ENCODE measurements at regions of chr7 and their contacts with region 1.

Region 1: DNA sequence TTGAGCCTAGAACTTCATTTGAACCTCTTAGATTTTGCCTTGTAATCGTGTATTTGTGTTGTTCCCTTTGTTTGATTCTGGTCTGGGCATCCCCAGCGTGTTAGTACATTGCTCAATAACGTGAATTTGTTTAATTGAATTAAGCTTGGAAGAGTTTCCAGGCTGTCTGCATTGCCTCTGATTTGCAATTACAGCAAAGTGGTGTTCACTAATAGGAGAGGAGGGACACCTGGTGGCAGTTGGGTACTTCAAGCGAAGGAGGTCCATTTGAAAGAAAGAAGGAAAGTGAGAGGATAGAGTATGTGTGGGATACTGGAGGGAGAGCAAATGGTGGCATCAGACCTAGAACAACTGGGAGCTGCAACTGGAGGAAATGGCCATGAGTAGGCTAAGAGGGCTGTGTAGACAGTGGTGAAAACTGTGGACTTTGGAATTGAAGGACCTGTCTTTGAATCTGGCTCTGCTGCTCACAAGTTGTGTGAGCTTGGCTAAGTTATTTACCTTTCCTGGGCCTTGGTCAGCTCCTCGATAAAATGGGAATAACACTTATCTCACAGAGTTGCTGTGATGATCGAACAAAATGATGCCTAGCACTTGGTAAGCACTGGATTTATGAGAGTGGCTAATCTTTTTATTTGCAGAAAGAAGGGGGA is 15.1 kb downstream of the LSMEM1 start:
- DNase-seq: peak; percentile 62 to 63
- H3K4me3 ChIP-seq: no peak overlapping the region
- H3K4me3 Mint-ChIP-seq: no peak overlapping the region
- H3K27ac Mint-ChIP-seq: no peak overlapping the region
- H3K4me1 ChIP-seq: no peaks in the 10 kb centered on the region
- H3K4me1 Mint-ChIP-seq: peaks cover 13% of the 10 kb centered on the region
- H3K27me3 ChIP-seq: no peaks in the 10 kb centered on the region
- H3K27me3 Mint-ChIP-seq: peaks cover 3% of the 10 kb centered on the region
- CTCF ChIP-seq: peak; percentile 56 to 74

Region 2: DNA sequence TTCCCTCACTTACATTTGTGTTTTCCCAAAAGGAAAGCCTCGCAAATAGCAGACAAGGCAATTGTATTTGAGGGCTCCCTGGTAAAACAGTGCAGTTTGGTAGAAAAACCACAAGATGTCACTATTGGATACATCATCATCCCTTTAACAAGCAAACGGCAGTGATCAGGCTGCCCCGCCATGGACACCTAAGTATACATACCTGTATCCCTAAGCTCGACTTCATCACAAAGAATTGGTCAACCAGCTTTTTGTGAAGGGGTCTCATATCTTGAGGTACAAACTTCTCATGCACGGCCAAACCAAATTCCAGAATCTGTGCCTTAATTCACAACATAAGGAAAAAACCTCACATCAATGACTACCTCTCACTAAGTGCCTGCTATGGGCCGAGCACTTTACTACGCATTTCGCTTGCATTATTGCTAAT is 754.1 kb before region 1 on chr7:
- CTCF ChIA-PET with region 1: no interaction called
- POLR2A ChIA-PET with region 1: no interaction called
- intact Hi-C with region 1: loop called (anchors 1 kb)
- DNase-seq: peak; percentile 65 to 67
- H3K4me3 ChIP-seq: no peak overlapping the region
- H3K4me3 Mint-ChIP-seq: no peak overlapping the region
- H3K27ac Mint-ChIP-seq: no peak overlapping the region
- H3K4me1 ChIP-seq: peaks cover 6% of the 10 kb centered on the region; the same call in 1 of the 2 replicates
- H3K4me1 Mint-ChIP-seq: peaks cover 8% of the 10 kb centered on the region
- H3K27me3 ChIP-seq: no peaks in the 10 kb centered on the region
- H3K27me3 Mint-ChIP-seq: no peaks in the 10 kb centered on the region
- CTCF ChIP-seq: peak; percentile 69 to 70

Region 3: DNA sequence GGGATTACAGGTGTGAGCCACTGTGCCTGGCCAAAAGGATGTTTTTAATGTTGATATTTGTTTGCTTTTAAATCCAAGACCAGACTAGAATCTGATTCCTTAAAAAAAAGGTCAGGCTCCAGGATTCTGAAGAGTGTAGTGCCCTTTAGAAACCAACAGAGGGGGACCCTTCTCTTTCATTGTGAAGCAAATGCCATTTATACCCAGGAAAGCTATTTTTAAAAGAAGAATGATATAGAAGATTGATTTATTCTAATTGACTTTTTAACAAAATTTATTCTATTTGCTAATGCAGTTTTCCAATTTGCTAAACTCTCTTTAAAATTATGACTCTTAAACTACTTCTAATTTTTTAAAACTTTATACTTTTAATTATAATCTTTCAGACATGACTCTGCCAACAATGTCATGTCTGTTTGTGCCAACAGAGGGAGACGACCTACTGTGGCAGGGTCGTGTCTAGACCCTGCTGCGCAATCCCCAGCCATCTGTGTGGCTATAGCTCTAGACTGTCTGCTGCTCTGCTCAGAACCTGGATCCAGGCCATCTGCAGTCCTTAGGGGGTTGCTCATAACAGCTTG is 732.6 kb before region 1 on chr7:
- CTCF ChIA-PET with region 1: no interaction called
- POLR2A ChIA-PET with region 1: no interaction called
- intact Hi-C with region 1: loop called (anchors 1 kb)
- DNase-seq: peak in 1 of 2 experiments; percentile 32
- H3K4me3 ChIP-seq: no peak overlapping the region
- H3K4me3 Mint-ChIP-seq: no peak overlapping the region
- H3K27ac Mint-ChIP-seq: no peak overlapping the region
- H3K4me1 ChIP-seq: peaks cover under 1% of the 10 kb centered on the region; the same call in 1 of the 2 replicates
- H3K4me1 Mint-ChIP-seq: no peaks in the 10 kb centered on the region
- H3K27me3 ChIP-seq: no peaks in the 10 kb centered on the region
- H3K27me3 Mint-ChIP-seq: no peaks in the 10 kb centered on the region
- CTCF ChIP-seq: peak; percentile 57 to 72

Region 4: DNA sequence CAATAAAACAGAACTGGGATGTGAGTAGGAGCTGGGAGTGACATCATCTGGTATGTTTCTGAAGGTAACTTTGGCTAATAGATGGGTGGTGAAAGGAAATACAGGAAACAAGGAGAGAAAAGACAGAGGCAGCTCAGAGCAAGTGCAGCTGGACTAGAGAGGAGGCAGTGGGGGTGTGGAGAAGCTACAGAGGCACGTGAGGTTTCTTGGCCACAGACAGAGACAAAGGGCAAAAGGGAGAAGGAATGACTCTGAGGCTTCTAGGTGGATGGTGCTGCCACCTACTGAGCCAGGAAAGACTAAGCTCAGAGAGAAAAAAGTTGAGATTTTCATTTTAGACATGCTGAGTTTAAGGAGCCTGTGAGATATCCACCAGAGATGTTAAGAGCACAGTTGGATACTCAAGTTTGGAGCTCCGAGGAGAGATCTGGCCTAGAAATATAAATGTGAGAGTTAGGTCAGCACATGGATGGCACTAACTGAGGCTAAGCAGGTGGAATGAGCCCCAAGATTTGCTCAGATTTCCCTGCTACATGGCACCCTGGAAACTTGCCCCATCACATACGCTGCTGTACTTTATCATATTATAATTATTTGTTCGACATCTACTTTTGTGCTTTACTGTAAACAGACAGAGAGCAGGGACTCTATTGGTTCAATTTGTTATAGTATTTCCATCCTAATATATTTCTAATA is 640.6 kb before region 1 on chr7:
- CTCF ChIA-PET with region 1: interaction called, 3 read pairs
- POLR2A ChIA-PET with region 1: no interaction called
- intact Hi-C with region 1: loop called (anchors 10 kb)
- DNase-seq: peak; percentile 59 to 61
- H3K4me3 ChIP-seq: no peak overlapping the region
- H3K4me3 Mint-ChIP-seq: no peak overlapping the region
- H3K27ac Mint-ChIP-seq: no peak overlapping the region
- H3K4me1 ChIP-seq: peaks cover 10% of the 10 kb centered on the region
- H3K4me1 Mint-ChIP-seq: peaks cover 9% of the 10 kb centered on the region
- H3K27me3 ChIP-seq: no peaks in the 10 kb centered on the region
- H3K27me3 Mint-ChIP-seq: no peaks in the 10 kb centered on the region
- CTCF ChIP-seq: peak; percentile 46 to 75

Region 5: GRCh38 chr7:112080441-112080840 is 415.5 kb before region 1 on chr7:
- CTCF ChIA-PET with region 1: no interaction called
- POLR2A ChIA-PET with region 1: no interaction called
- intact Hi-C with region 1: loop called (anchors 10 kb)
- DNase-seq: no peak
- H3K4me3 ChIP-seq: no peak overlapping the region
- H3K4me3 Mint-ChIP-seq: no peak overlapping the region
- H3K27ac Mint-ChIP-seq: no peak overlapping the region
- H3K4me1 ChIP-seq: no peaks in the 10 kb centered on the region
- H3K4me1 Mint-ChIP-seq: no peaks in the 10 kb centered on the region
- H3K27me3 ChIP-seq: no peaks in the 10 kb centered on the region
- H3K27me3 Mint-ChIP-seq: no peaks in the 10 kb centered on the region
- CTCF ChIP-seq: no peak

Region 6: DNA sequence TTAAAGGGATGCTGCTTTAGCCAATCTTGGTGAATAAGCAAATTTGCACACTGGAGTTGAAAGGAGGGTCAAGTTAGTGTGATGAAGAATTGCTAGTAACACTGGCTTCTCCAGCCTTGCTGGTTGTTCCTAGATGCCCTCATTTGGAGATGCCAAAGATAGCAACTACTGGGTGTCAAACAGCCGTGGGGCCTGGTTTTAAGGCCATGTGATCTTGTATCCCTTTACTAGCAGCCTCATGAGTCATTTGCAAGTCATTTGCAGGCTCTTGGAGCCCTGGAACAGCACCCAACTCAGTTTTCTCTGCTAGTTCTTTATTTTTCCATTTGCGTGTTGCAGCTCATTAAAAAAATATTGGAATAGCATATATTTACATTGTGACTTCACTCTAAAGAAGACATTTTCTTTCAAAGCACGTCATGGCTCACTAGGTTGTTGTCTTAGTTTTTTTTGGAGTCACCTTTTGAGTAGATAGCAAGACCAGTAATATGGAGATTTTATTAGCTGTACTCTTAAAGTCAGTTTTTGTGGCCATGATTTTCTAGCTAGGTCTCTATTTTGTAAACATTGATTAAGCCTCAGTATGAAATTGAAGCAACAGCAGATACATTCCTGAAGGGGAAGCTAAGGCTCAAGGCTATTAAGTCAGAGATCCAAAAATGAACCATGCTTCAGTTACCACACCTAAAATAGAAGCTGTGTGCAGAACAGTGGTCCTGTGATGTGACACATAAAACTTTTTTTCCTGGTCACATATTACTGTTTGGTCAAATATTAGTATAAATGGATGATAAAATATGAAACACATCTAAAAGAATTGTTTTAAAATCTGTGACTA is 13.9 kb before region 1 on chr7:
- CTCF ChIA-PET with region 1: no interaction called
- POLR2A ChIA-PET with region 1: no interaction called
- intact Hi-C with region 1: loop called (anchors 1 kb)
- DNase-seq: peak; percentile 27 to 41
- H3K4me3 ChIP-seq: no peak overlapping the region
- H3K4me3 Mint-ChIP-seq: no peak overlapping the region
- H3K27ac Mint-ChIP-seq: no peak overlapping the region
- H3K4me1 ChIP-seq: peaks cover 25% of the 10 kb centered on the region
- H3K4me1 Mint-ChIP-seq: peaks cover 13% of the 10 kb centered on the region
- H3K27me3 ChIP-seq: no peaks in the 10 kb centered on the region
- H3K27me3 Mint-ChIP-seq: no peaks in the 10 kb centered on the region
- CTCF ChIP-seq: no peak

Region 7: GRCh38 chr7:112550468-112551060 is 54.6 kb after region 1 on chr7:
- CTCF ChIA-PET with region 1: no interaction called
- POLR2A ChIA-PET with region 1: no interaction called
- intact Hi-C with region 1: no loop called
- DNase-seq: peak in 1 of 2 experiments; percentile 67
- H3K4me3 ChIP-seq: no peak overlapping the region
- H3K4me3 Mint-ChIP-seq: no peak overlapping the region
- H3K27ac Mint-ChIP-seq: no peak overlapping the region
- H3K4me1 ChIP-seq: no peaks in the 10 kb centered on the region
- H3K4me1 Mint-ChIP-seq: no peaks in the 10 kb centered on the region
- H3K27me3 ChIP-seq: no peaks in the 10 kb centered on the region
- H3K27me3 Mint-ChIP-seq: no peaks in the 10 kb centered on the region
- CTCF ChIP-seq: peak; percentile 82 to 89